Heart left ventricle (tissue), 16 donors: ENCODE measurements at regions of chr18 and their contacts with region 1.

Region 1: DNA sequence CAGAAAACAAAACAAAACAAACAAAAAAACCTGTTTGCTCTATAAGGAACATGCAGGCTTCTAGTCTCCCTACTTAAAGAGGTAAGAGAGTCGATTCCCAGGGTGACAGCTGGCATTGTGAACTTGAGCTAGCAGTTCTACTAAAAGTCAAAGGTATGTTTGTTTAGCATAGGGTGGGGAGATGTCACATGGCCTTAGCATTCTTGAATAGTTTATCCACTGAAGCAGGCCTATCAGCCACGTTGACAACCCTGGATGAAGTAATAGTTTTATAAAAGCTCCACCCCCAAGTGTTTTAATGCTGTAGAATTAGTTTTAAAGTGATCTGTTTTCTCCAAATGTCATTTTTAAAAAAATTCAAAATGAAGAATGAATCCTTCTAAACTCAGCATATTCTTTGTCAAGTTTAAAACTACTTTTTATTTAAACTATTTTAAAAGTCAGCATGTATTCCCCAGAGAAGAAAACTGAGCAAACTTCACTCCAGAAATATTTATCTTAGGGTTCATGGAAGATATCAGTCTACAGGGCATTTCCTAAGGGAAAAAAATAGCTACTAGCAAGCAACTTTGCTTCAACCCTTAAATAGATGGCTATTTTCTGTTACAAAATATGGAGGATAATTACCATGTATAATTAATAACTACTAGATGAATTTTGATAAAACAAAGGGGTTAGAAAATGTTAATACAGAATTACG is 1.7 kb downstream of the MYOM1 start:
- DNase-seq: peak in 1 of 5 donors; percentile 37
- ATAC-seq: peak; percentile 41 to 55 (median 53)
- H3K4me3 ChIP-seq: peak overlapping the region; percentile 4 to 70 (median 60)
- H3K27ac ChIP-seq: peak overlapping the region; percentile 77 to 97 (median 90)
- H3K4me1 ChIP-seq: peaks cover 0 to 34% (median 9%) of the 10 kb centered on the region in 12 donors
- H3K27me3 ChIP-seq: no peaks in the 10 kb centered on the region
- CTCF ChIP-seq: no peak
- POLR2A ChIP-seq: peak; percentile 12 to 54

Region 2: GRCh38 chr18:3151399-3152264 is 66.5 kb before region 1 on chr18:
- intact Hi-C with region 1: loop called in 1 of 10 experiments (anchors 10 kb)
- DNase-seq: no peak
- ATAC-seq: no peak
- H3K4me3 ChIP-seq: no peak overlapping the region
- H3K27ac ChIP-seq: peak overlapping the region in 1 of 12 donors; percentile 0
- H3K4me1 ChIP-seq: peaks cover 3 to 39% (median 20%) of the 10 kb centered on the region in 12 donors
- H3K27me3 ChIP-seq: no peaks in the 10 kb centered on the region
- CTCF ChIP-seq: peak; percentile 64 to 86 (median 72)
- POLR2A ChIP-seq: no peak

Region 3: DNA sequence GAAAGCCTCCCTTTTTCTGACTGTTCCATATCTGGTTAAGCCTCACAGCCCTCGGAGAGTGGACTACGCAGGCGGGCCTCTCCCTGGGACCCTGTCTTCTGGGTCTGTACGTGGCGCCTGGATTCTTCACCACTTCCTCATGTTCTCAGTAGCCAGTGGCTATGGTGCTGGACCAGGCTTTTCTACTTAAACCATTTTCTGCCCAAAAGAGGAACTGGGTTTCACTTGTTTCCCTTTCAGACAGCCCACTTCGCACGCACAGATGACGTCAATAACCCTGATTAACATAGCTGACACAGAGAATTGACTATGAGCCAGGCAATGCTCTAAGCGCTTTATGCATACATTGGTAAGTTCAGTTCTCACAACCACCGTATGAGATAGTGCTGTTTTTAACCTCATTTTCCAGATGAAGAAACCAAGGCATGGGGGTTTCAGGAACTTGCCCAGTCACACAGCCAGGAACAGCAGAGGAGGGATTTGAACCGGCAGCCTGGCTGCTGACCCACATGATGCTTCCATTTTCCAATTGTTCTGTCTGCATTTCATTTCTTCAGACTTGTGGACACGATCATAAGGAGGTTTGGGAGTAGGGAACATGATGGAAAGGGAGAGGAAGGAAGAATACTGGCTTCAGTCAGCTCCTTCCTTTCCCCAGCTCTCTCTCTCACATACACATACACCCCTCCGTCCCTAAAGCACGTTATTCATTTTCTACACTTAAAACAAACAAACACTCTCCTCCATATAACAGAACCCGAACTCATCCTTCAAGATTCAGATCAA is 40.0 kb before region 1 on chr18:
- intact Hi-C with region 1: loop called in 1 of 10 experiments (anchors 5 kb)
- DNase-seq: peak in 4 of 5 donors; percentile 52 to 68 (median 62)
- ATAC-seq: peak; percentile 39 to 71 (median 52)
- H3K4me3 ChIP-seq: no peak overlapping the region
- H3K27ac ChIP-seq: peak overlapping the region in 11 of 12 donors; percentile 10 to 87 (median 45)
- H3K4me1 ChIP-seq: peaks cover 0 to 37% (median 14%) of the 10 kb centered on the region in 12 donors
- H3K27me3 ChIP-seq: no peaks in the 10 kb centered on the region
- CTCF ChIP-seq: no peak
- POLR2A ChIP-seq: no peak

Region 4: GRCh38 chr18:3186678-3187658 is 31.1 kb before region 1 on chr18:
- intact Hi-C with region 1: loop called in 2 of 10 experiments (anchors 5 kb)
- DNase-seq: peak in 1 of 5 donors; percentile 33
- ATAC-seq: peak in 3 of 4 donors; percentile 25 to 50 (median 32)
- H3K4me3 ChIP-seq: no peak overlapping the region
- H3K27ac ChIP-seq: peak overlapping the region in 1 of 12 donors; percentile 2
- H3K4me1 ChIP-seq: peaks cover 0 to 35% (median 9%) of the 10 kb centered on the region in 12 donors
- H3K27me3 ChIP-seq: no peaks in the 10 kb centered on the region
- CTCF ChIP-seq: peak in 8 of 12 donors; percentile 7 to 41 (median 24)
- POLR2A ChIP-seq: no peak

Region 5: DNA sequence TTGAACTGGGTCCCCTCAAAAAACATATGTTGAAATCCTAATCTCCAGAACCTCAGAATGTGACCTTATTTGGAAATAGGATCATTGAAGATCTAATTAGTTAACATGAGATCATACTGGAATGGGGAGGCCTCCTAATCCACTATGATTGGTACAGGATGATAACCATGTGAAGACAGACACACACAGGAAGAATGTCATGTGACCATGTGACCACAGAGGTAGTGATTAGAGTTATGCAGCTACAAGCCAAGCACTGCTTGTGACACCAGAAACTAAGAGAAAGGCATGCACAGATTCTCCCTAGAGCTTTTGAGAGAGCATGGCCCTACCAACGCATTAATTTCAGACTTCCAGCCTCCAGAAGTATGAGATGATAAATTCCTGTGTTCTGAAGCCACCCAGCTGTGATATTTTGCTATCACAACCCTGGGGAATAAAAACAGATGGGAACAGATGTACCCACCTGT is 184.9 kb after region 1 on chr18:
- intact Hi-C with region 1: no loop called
- DNase-seq: no peak
- ATAC-seq: peak in 1 of 4 donors; percentile 28
- H3K4me3 ChIP-seq: no peak overlapping the region
- H3K27ac ChIP-seq: no peak overlapping the region
- H3K4me1 ChIP-seq: no peaks in the 10 kb centered on the region
- H3K27me3 ChIP-seq: no peaks in the 10 kb centered on the region
- CTCF ChIP-seq: no peak
- POLR2A ChIP-seq: no peak